ENCODE measurements at regions of chr1 and their contacts with region 1.

Region 1: DNA sequence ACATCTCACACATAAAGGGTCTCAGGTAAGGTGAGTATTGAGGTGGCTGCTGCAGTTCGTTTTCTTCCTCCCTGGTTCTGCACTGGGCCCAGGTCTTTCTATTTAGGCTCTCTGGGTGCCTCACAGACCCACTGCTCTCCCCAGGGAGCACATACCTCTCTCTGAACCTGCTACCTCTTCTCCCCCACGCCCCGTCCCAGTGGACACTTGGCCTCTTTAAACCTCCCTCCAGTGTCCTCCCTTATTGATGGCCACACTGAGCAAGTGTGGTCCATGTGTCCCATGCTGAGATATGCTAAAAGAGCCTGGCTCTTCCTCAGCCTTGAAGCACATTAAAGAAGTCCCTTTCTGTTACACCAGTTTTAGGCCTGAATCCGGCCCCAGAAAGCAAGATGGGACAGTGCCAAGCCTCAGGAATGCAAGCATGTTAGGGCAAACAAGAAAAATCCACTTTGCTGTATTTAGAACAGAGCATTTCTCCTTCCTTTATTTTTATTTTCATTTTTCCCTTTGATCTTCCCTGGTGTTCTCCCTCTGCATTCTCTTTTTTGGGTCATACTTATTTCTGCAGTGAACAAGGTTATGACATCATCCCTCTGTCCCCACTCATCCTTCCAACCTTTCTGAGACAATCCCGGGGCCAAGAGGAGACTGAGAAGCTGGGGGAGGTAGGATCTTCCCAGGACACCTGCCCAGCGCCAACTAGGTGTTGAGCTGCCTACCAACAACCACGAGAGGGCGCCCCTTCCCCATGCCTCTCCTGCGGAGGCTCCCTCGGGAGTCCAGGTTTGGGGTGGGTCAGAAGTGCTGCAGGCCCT is 5.0 kb upstream of the CHI3L2 start:
- DNase-seq: peak; percentile 89
- H3K4me3 ChIP-seq: peak overlapping the region; percentile 53
- H3K27ac ChIP-seq: peak overlapping the region; percentile 97
- H3K4me1 ChIP-seq: peaks cover 84% of the 10 kb centered on the region
- CTCF ChIP-seq: peak; percentile 99

Region 2: DNA sequence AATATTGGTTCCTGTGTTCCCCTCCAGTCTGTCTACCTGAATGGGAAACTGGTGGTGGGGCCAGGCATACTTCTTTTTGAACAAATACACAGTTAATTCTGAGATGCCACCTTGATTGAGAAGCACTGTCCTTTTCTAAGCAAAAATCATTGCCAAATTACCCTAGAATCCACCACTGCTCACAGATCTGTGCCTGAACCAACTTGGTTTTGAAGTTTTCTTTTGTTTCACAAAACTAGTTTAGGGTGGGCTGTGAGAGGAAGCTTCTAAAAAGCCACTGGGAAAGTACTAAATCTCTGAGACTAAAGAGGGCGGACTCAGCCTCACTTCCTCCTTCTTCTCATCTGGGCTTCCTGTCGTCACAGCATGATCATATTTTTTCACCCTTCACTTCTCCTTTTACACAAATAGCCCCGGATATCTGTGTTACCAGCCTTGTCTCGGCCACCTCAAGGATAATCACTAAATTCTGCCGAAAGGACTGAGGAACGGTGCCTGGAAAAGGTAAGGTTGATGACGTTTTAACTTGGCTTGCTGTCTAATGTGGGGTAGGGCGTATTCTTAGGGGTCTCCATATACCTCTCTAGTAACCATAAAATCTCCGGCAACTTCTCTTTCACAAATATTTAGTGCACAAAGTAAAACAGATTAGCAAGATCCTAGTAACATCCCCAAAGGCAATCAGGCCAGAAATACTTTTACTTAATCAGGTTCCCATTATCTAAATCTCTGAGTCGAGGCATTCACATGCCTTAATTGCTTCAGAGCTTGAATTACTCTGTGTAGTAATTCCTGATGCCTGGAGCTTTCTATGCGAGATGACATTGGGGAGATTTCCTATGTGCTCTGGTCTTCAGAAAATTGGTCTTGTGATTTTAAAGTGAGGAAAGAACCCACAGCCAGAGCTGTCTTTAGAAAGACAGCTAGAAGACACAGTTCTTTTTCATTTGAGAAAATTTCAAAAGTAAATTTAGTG is 349.5 kb before region 1 on chr1 and contains the start of gene CD53:
- CTCF ChIA-PET with region 1: no interaction called
- POLR2A ChIA-PET with region 1: interaction called, 4 read pairs
- intact Hi-C with region 1: loop called (anchors 2 kb)
- DNase-seq: peak; percentile 91
- H3K4me3 ChIP-seq: peak within 1 kb of the TSS; percentile 82
- H3K27ac ChIP-seq: peak within 1 kb of the TSS; percentile 98
- H3K4me1 ChIP-seq: peaks cover 60% of the 10 kb centered on the region
- CTCF ChIP-seq: no peak
- total RNA-seq, gene CD53: 119 and 134 TPM in 2 replicates

Region 3: DNA sequence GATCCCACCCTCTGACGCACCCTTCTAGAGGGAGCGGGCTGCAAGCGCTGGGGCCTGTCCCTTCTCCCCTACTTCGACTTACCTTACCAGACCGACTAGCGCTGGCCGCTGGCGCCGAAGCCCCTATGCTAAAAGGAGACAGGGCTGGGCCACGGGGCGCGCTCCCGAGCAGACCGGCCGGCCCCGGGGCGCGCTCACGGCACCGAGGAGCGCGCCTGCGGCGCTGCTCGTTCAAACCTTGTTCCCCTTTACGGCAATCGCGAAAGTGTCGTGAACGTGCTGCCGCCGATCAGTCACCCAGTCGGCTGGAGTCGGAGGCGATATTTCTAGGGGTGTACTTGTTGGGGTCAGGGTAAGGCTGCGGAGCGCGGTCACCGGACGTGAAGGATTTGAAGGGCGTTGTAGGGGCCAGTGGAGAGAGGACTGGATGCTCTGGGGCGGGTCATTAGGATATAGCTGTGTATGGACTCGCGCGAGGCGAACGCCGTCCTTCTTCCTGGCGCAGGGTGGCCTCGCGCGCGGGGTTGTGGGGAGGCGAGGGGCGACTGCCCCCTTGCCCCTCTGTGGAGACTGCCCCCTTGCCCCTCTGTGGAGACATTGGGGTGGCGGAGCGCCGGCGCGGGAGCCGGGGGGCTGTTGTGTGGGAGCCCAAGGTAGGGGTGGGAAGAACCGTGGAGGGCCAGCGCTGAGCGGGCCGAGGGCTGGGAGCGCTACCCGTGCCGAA is 82.4 kb before region 1 on chr1 and contains the starts of genes CEPT1 and DRAM2:
- CTCF ChIA-PET with region 1: interaction called, 4 read pairs
- POLR2A ChIA-PET with region 1: interaction called, 114 read pairs
- intact Hi-C with region 1: no loop called
- DNase-seq: peak; percentile 97
- H3K4me3 ChIP-seq: peak within 1 kb of the TSS; percentile 94
- H3K27ac ChIP-seq: peak within 1 kb of the TSS; percentile 91
- H3K4me1 ChIP-seq: peaks cover 55% of the 10 kb centered on the region
- CTCF ChIP-seq: no peak
- total RNA-seq, gene CEPT1: 41.5 and 44.9 TPM in 2 replicates
- total RNA-seq, gene DRAM2: 75.2 and 84.2 TPM in 2 replicates

Region 4: DNA sequence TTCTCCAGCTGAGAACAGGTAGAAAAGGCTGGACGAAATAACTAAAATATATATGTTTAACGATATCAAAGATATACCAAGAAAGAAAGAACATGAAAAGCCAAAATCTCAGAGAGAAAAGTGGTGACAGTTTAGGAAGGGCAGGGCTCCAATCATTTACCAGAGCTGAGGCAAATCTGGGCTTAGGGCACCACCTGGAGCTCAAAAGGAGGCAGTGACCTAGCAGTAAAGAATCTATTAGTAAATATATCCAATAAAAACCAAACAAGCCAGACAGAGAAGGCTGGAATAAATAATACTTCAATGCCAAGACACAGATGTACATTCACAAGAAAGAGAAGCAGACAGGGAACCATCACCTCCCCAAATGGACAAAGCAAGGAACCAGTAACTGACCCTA is 111.7 kb after region 1 on chr1:
- CTCF ChIA-PET with region 1: interaction called, 4 read pairs
- POLR2A ChIA-PET with region 1: interaction called, 3 read pairs
- intact Hi-C with region 1: loop called (anchors 1 kb)
- DNase-seq: peak; percentile 74
- H3K4me3 ChIP-seq: no peak overlapping the region
- H3K27ac ChIP-seq: no peak overlapping the region
- H3K4me1 ChIP-seq: no peaks in the 10 kb centered on the region
- CTCF ChIP-seq: peak; percentile 95

Region 5: GRCh38 chr1:111441573-111442192 is 219.2 kb after region 1 on chr1:
- CTCF ChIA-PET with region 1: interaction called, 3 read pairs
- POLR2A ChIA-PET with region 1: interaction called, 3 read pairs
- intact Hi-C with region 1: loop called (anchors 1 kb)
- DNase-seq: peak; percentile 79
- H3K4me3 ChIP-seq: no peak overlapping the region
- H3K27ac ChIP-seq: no peak overlapping the region
- H3K4me1 ChIP-seq: peaks cover 4% of the 10 kb centered on the region
- CTCF ChIP-seq: peak; percentile 94

Region 6: DNA sequence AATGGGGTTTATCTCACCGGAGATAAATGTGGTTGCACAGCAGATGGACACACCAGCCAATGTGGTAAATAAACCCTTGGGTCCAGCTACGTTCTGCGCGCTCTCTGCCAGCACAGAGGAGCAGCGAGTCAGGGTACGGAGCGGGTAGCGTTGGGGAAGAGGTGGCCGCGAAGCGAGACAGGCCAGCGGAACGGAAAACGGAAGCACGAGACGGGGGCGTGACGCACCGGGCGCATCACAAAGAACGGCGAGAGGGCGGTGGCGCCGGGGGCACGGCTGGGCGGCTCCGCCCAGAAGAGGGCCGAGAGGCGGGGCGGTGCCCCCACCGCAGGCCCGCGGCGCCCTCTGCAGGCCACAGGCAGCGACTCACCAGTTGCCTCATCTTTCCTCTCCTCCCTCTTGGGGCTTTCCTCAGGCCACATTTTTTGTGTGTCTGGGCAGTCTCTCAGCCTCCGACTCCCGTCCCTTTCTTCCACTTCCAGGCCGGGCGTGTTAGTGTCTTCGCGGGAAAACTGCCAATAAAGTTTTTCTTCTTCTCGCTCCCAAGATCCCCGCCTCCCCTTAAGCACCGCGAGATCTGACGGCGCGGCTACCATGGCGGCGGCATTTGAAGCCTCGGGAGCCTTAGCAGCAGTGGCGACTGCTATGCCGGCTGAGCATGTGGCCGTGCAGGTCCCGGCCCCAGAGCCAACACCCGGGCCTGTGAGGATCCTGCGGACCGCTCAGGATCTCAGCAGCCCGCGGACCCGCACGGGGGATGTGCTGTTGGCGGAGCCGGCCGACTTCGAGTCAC is 533.0 kb after region 1 on chr1 and contains the start of gene DDX20:
- CTCF ChIA-PET with region 1: no interaction called
- POLR2A ChIA-PET with region 1: no interaction called
- intact Hi-C with region 1: loop called (anchors 5 kb)
- DNase-seq: peak; percentile 95
- H3K4me3 ChIP-seq: peak within 1 kb of the TSS; percentile 83
- H3K27ac ChIP-seq: peak within 1 kb of the TSS; percentile 81
- H3K4me1 ChIP-seq: peaks cover 59% of the 10 kb centered on the region
- CTCF ChIP-seq: peak; percentile 94
- total RNA-seq, gene DDX20: 28.8 and 32.9 TPM in 2 replicates